ENCODE measurements at regions of chr1 and their contacts with region 1.

Region 1: DNA sequence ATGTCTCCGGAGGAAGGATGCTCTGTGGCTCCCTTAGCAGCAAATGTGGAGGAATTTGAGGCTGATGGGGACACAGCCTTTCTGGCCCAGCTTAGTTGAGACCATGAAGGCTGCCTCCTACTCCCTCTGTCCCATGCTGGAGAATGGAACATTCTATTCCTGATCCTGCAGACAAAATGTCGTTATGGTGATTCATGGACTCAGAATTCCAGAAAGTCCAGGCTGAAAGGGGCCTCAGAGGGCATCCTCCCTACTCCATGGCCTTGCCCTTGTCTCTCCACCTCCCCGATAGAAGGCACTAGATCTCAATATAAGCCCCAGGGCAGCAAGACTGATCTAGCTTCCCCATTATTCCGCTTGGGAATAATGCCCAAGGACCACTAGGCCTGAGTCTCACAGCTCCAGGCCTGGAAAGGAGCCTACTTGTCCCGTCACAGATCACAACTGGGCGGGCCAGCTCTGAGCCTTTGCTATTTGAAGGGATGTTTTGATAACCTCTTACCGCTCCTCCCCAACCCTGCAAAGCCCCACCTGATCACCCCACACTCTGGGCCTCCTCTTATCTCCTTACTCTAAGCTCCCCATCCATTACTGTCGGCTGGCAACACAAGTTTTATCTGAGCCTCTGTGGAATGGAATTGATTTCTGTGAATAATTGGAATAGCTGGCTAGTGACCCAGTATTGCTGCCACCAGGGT is 52.8 kb upstream of the TRABD2B start:
- DNase-seq: no peak
- H3K27ac ChIP-seq: no peak overlapping the region
- CTCF ChIP-seq: no peak

Region 2: GRCh38 chr1:48017716-48018115 is 32.3 kb before region 1 on chr1:
- CTCF ChIA-PET with region 1: interaction called, 10 read pairs
- POLR2A ChIA-PET with region 1: no interaction called
- DNase-seq: no peak
- H3K27ac ChIP-seq: peak overlapping the region; percentile 53
- CTCF ChIP-seq: no peak

Region 3: GRCh38 chr1:48061162-48062136 is 11.5 kb after region 1 on chr1:
- CTCF ChIA-PET with region 1: interaction called, 12 read pairs
- POLR2A ChIA-PET with region 1: no interaction called
- DNase-seq: peak; percentile 62
- H3K27ac ChIP-seq: no peak overlapping the region
- CTCF ChIP-seq: peak; percentile 72